Calu3 (cell line): ENCODE measurements at regions of chr17 and their contacts with region 1.

Region 1: DNA sequence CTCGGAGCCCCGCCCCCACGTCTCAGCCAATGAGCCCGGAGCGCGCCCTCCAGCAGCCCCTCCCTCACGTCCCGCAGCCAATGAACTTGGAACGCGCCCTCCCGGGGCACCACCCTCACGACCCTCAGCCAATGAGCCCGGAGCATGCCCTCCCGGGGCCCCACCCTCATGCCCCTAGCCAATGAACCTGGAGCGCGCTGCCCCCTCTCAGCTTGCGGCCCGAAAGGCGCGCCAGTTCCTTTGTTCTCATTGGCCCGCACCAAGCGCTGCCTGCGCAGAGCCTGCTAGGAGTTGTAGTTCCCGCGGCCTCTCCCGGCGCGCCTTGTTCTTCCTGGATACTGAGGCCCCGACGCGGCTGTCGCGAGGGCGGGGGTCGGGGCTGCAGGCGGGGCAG is at the start of gene LRRC45:
- DNase-seq: peak; percentile 100
- H3K4me3 Mint-ChIP-seq: peak within 1 kb of the TSS; percentile 81
- H3K27ac Mint-ChIP-seq: peak within 1 kb of the TSS; percentile 76
- H3K4me1 Mint-ChIP-seq: peaks cover 8% of the 10 kb centered on the region
- H3K27me3 Mint-ChIP-seq: no peaks in the 10 kb centered on the region
- CTCF ChIP-seq: no peak
- total RNA-seq, gene LRRC45: 31.2 and 32.6 TPM in 2 replicates

Region 2: GRCh38 chr17:81954131-81955057 is 68.6 kb before region 1 on chr17:
- CTCF ChIA-PET with region 1: interaction called, 45 read pairs
- intact Hi-C with region 1: loop called (anchors 2 kb)
- DNase-seq: no peak
- H3K4me3 Mint-ChIP-seq: no peak overlapping the region
- H3K27ac Mint-ChIP-seq: no peak overlapping the region
- H3K4me1 Mint-ChIP-seq: no peaks in the 10 kb centered on the region
- H3K27me3 Mint-ChIP-seq: peaks cover 50% of the 10 kb centered on the region
- CTCF ChIP-seq: no peak

Region 3: DNA sequence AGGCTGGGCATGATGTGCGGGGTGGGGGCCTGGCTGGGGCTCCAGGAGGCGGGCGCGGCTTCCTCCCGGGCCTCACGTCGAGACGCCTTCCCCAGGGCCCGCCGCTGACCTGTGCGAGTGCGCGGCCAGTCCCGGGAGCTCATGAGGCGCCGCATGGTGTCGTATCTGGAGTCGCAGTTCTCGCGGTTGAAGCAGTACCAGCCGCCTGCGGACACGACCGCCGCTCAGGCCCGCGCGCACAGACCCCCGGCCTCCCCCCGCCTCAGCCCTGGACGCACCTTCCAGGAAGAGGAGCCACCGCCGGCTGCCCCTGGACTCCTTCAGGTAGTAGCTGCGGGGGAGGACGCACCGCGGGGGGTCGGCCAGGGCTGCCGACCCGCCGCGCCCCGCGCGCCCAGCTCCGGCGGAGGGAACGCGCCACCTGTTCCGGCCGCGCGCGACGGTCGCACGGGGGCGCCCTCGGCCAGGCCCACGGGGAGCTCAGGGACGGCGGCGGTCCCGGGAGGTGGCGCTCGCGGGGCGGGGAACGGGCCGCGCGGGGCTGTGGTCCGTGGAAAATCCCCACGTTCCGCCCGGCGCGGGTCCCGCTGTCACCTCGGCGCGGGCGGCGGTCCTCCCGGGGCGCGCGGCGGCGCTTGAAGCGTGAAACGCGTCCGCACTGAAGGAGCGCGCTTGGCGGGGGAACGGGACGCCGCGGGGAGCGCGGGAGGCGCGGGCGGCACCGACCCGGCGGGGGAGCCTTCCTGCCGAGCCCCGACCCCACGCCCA is 63.4 kb before region 1 on chr17:
- CTCF ChIA-PET with region 1: interaction called, 45 read pairs
- intact Hi-C with region 1: loop called (anchors 2 kb)
- DNase-seq: peak; percentile 76
- H3K4me3 Mint-ChIP-seq: peak overlapping the region; percentile 24
- H3K27ac Mint-ChIP-seq: no peak overlapping the region
- H3K4me1 Mint-ChIP-seq: no peaks in the 10 kb centered on the region
- H3K27me3 Mint-ChIP-seq: peaks cover 56% of the 10 kb centered on the region
- CTCF ChIP-seq: peak; percentile 80

Region 4: GRCh38 chr17:82037113-82037888 is 14.3 kb after region 1 on chr17 and contains the start of gene DCXR:
- CTCF ChIA-PET with region 1: interaction called, 24 read pairs
- intact Hi-C with region 1: no loop called
- DNase-seq: peak; percentile 98
- H3K4me3 Mint-ChIP-seq: peak within 1 kb of the TSS; percentile 86
- H3K27ac Mint-ChIP-seq: peak within 1 kb of the TSS; percentile 31
- H3K4me1 Mint-ChIP-seq: peaks cover 7% of the 10 kb centered on the region
- H3K27me3 Mint-ChIP-seq: no peaks in the 10 kb centered on the region
- CTCF ChIP-seq: peak; percentile 84
- total RNA-seq, gene DCXR: 87.8 and 95.3 TPM in 2 replicates

Region 5: GRCh38 chr17:82110298-82110697 is 87.3 kb after region 1 on chr17:
- CTCF ChIA-PET with region 1: no interaction called
- intact Hi-C with region 1: no loop called
- DNase-seq: peak; percentile 43
- H3K4me3 Mint-ChIP-seq: no peak overlapping the region
- H3K27ac Mint-ChIP-seq: no peak overlapping the region
- H3K4me1 Mint-ChIP-seq: peaks cover 23% of the 10 kb centered on the region
- H3K27me3 Mint-ChIP-seq: no peaks in the 10 kb centered on the region
- CTCF ChIP-seq: no peak

Region 6: DNA sequence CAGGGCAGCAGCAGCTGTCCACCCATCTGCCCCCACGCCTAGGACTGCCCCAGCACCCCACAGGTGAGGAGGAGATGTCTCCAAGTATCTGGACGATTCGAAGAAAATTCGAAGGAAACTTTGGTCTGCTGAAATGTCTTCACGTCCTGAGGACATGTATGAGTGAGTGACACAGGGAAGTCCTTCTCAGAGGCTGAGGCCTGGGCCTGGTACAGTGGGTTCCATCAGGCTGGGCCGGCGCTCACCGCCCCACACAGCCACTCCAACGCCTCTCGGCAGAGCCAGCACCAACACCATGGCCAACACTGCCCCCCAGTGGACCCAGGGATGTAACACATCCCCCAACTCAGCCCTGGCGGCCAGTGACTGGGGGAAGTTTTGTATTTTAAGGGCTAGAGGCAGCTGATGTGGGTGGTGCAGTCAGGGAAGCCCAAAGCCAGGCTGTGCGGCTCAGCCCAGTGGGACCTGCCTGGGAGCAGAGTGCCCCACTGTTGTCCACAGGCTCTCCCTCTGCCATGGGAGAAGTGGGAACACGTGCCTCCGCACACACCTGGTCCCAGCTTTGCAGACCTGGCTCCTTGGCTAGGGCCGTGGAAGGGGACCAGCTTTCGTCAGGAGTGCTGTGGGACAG is 130.9 kb after region 1 on chr17:
- CTCF ChIA-PET with region 1: interaction called, 4 read pairs
- intact Hi-C with region 1: loop called (anchors 5 kb)
- DNase-seq: peak; percentile 86
- H3K4me3 Mint-ChIP-seq: no peak overlapping the region
- H3K27ac Mint-ChIP-seq: no peak overlapping the region
- H3K4me1 Mint-ChIP-seq: no peaks in the 10 kb centered on the region
- H3K27me3 Mint-ChIP-seq: no peaks in the 10 kb centered on the region
- CTCF ChIP-seq: peak; percentile 91